Endothelial cell of umbilical vein (primary cell): ENCODE measurements at regions of chr16 and their contacts with region 1.

Region 1: GRCh38 chr16:77850636-77851333 is 62.4 kb downstream of the VAT1L start:
- DNase-seq: peak; percentile 32
- H3K4me3 ChIP-seq: no peak overlapping the region
- H3K27ac ChIP-seq: no peak overlapping the region
- H3K4me1 ChIP-seq: no peaks in the 10 kb centered on the region
- H3K27me3 ChIP-seq: peaks cover 2 to 7% of the 10 kb centered on the region in 2 experiments
- CTCF ChIP-seq: no peak
- POLR2A ChIP-seq: no peak

Region 2: DNA sequence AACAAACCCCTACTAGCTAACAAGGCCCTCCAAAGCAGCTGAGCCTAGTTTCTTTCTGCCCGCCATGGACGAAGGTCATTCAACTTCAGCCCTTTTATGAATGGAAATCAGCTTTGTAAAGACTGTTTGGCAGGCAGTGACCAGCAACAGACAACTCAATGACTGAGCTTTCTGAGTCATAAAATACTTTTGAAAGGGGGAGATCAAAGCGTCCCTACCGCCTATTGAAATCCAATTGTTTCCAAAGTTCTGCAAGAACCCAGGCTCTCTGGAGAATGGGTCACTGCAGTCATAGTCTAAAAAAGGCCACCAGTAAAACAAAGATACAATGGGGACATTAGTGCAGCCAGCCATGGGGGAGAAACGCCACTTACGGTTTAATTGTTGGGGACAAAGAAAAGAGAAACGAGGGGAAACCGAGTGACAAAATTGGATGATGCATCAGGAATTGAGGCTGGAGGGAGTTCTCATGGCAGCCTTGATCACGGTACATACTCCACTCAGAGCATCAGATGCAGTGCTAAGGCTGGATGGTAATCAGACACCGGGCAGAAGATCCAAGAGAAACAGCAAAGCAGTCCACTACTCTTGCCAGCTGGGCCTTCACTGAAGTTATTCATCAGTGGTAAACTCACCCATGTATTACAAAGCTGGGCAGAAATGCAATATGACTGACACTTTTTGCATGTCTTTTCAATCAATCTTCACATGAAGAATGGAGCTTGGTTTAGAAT is 425.7 kb before region 1 on chr16:
- CTCF ChIA-PET with region 1: no interaction called
- POLR2A ChIA-PET with region 1: no interaction called
- dilution Hi-C with region 1: no loop called
- intact Hi-C with region 1: no loop called
- DNase-seq: no peak
- H3K4me3 ChIP-seq: no peak overlapping the region
- H3K27ac ChIP-seq: no peak overlapping the region
- H3K4me1 ChIP-seq: no peaks in the 10 kb centered on the region
- H3K27me3 ChIP-seq: no peaks in the 10 kb centered on the region
- CTCF ChIP-seq: no peak
- POLR2A ChIP-seq: no peak

Region 3: GRCh38 chr16:77918809-77919707 is 68.3 kb after region 1 on chr16:
- CTCF ChIA-PET with region 1: no interaction called
- POLR2A ChIA-PET with region 1: no interaction called
- dilution Hi-C with region 1: no loop called
- intact Hi-C with region 1: loop called (anchors 2 kb)
- DNase-seq: peak; percentile 67
- H3K4me3 ChIP-seq: no peak overlapping the region
- H3K27ac ChIP-seq: no peak overlapping the region
- H3K4me1 ChIP-seq: peaks cover 6% of the 10 kb centered on the region
- H3K27me3 ChIP-seq: peaks cover 0 to 2% of the 10 kb centered on the region in 2 experiments
- CTCF ChIP-seq: no peak
- POLR2A ChIP-seq: no peak

Region 4: GRCh38 chr16:78081341-78081740 is 230.6 kb after region 1 on chr16:
- CTCF ChIA-PET with region 1: no interaction called
- POLR2A ChIA-PET with region 1: no interaction called
- dilution Hi-C with region 1: no loop called
- intact Hi-C with region 1: no loop called
- DNase-seq: no peak
- H3K4me3 ChIP-seq: no peak overlapping the region
- H3K27ac ChIP-seq: no peak overlapping the region
- H3K4me1 ChIP-seq: no peaks in the 10 kb centered on the region
- H3K27me3 ChIP-seq: no peaks in the 10 kb centered on the region
- CTCF ChIP-seq: no peak
- POLR2A ChIP-seq: no peak